Panc1 (cell line): ENCODE measurements at regions of chr4 and their contacts with region 1.

Region 1: GRCh38 chr4:7595934-7596461 is 161.3 kb upstream of the PSAPL1 start:
- DNase-seq: no peak
- ATAC-seq: no peak
- H3K4me3 ChIP-seq: no peak overlapping the region
- H3K27ac ChIP-seq: no peak overlapping the region
- H3K4me1 ChIP-seq: no peaks in the 10 kb centered on the region
- H3K27me3 ChIP-seq: no peaks in the 10 kb centered on the region
- CTCF ChIP-seq: no peak

Region 2: DNA sequence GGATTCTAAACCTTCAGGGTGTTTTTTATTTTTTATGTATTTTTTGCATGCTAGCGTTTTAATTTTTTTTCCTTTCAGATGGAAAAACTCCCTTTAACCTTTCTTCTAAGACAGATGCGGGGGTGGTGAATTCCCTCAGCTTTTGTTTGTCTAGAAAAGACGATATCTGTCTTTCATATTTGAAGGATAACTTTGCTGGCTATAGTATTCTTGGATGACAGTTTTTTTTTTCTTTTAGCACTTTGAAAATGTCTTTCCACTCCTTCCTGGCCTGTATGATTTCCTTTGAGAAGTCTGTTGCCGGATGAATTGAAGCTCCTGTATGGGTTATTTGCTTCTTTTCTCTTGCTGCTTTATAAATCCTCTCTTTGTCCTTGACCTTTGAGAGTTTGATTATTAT is 187.8 kb before region 1 on chr4:
- CTCF ChIA-PET with region 1: interaction called, 10 read pairs
- POLR2A ChIA-PET with region 1: no interaction called
- in situ Hi-C with region 1: no loop called
- intact Hi-C with region 1: no loop called
- DNase-seq: no peak
- ATAC-seq: no peak
- H3K4me3 ChIP-seq: no peak overlapping the region
- H3K27ac ChIP-seq: no peak overlapping the region
- H3K4me1 ChIP-seq: no peaks in the 10 kb centered on the region
- H3K27me3 ChIP-seq: no peaks in the 10 kb centered on the region
- CTCF ChIP-seq: no peak

Region 3: GRCh38 chr4:7719354-7720174 is 123.6 kb after region 1 on chr4:
- CTCF ChIA-PET with region 1: no interaction called
- POLR2A ChIA-PET with region 1: no interaction called
- in situ Hi-C with region 1: no loop called
- intact Hi-C with region 1: no loop called
- DNase-seq: no peak
- ATAC-seq: peak; percentile 88
- H3K4me3 ChIP-seq: peak overlapping the region; percentile 11 to 21; a peak in 2 of 4 replicates
- H3K27ac ChIP-seq: no peak overlapping the region
- H3K4me1 ChIP-seq: no peaks in the 10 kb centered on the region
- H3K27me3 ChIP-seq: no peaks in the 10 kb centered on the region
- CTCF ChIP-seq: peak; percentile 87